Activated CD4-positive, alpha-beta memory T cell treated with anti-CD3 and anti-CD28 coated beads for 36 hours (primary cell): ENCODE measurements at regions of chr4 and their contacts with region 1.

Region 1: GRCh38 chr4:86497980-86498862 is 95.9 kb upstream of the PTPN13 start:
- DNase-seq: no peak
- H3K4me3 Mint-ChIP-seq: no peak overlapping the region
- H3K27ac Mint-ChIP-seq: no peak overlapping the region
- H3K4me1 Mint-ChIP-seq: no peaks in the 10 kb centered on the region
- H3K27me3 Mint-ChIP-seq: peaks cover 1% of the 10 kb centered on the region

Region 2: GRCh38 chr4:86487738-86488348 is 10.4 kb before region 1 on chr4:
- CTCF ChIA-PET with region 1: interaction called, 23 read pairs
- POLR2A ChIA-PET with region 1: no interaction called
- intact Hi-C with region 1: no loop called
- DNase-seq: no peak
- H3K4me3 Mint-ChIP-seq: no peak overlapping the region
- H3K27ac Mint-ChIP-seq: no peak overlapping the region
- H3K4me1 Mint-ChIP-seq: no peaks in the 10 kb centered on the region
- H3K27me3 Mint-ChIP-seq: no peaks in the 10 kb centered on the region

Region 3: GRCh38 chr4:86522349-86522748 is 24.1 kb after region 1 on chr4:
- CTCF ChIA-PET with region 1: interaction called, 19 read pairs
- POLR2A ChIA-PET with region 1: no interaction called
- intact Hi-C with region 1: no loop called
- DNase-seq: no peak
- H3K4me3 Mint-ChIP-seq: no peak overlapping the region
- H3K27ac Mint-ChIP-seq: no peak overlapping the region
- H3K4me1 Mint-ChIP-seq: no peaks in the 10 kb centered on the region
- H3K27me3 Mint-ChIP-seq: peaks cover 13% of the 10 kb centered on the region

Region 4: GRCh38 chr4:86895692-86896488 is 397.7 kb after region 1 on chr4:
- CTCF ChIA-PET with region 1: interaction called, 64 read pairs
- POLR2A ChIA-PET with region 1: no interaction called
- intact Hi-C with region 1: loop called (anchors 1 kb)
- DNase-seq: no peak
- H3K4me3 Mint-ChIP-seq: no peak overlapping the region
- H3K27ac Mint-ChIP-seq: no peak overlapping the region
- H3K4me1 Mint-ChIP-seq: no peaks in the 10 kb centered on the region
- H3K27me3 Mint-ChIP-seq: peaks cover 15% of the 10 kb centered on the region

Region 5: DNA sequence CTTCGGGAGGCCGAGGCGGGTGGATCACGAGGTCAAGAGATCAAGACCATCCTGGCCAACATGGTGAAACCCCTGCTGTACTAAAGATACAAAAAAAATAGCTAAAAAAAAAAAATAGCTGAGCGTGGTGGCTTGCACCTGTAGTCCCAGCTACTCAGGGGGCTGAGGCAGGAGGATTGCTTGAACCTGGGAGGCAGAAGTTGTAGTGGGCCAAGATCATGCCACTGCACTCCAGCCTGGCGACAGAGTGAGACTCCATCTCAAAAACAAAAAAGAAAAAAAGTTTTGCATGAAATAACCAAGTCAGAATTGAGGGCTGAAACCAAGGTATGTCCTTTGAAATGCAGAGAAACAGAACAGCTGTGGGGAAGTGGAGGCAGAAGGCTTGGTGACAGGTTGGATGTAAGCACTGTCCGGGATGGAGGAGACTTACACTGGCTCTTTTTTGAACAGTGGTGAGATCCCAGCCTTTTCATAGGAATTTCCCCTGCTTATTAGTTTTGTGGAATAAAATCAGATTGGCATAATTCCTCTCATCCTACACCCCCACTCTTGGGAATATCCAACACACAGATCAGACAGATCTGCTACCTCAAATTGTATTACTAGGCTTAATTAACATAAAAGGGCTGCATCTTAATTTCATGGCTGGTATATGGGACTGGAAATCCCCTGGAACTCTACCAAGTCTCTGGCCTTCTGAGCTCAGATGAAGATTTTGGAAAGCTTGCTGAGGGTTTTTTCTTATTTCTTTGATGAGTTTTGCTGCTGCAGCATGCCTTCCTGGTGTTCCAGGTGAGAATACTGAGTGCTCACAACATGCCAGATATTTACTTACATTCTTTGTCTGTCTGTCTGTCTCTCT is 412.8 kb after region 1 on chr4:
- CTCF ChIA-PET with region 1: interaction called, 12 read pairs
- POLR2A ChIA-PET with region 1: no interaction called
- intact Hi-C with region 1: no loop called
- DNase-seq: no peak
- H3K4me3 Mint-ChIP-seq: no peak overlapping the region
- H3K27ac Mint-ChIP-seq: no peak overlapping the region
- H3K4me1 Mint-ChIP-seq: peaks cover 14% of the 10 kb centered on the region
- H3K27me3 Mint-ChIP-seq: no peaks in the 10 kb centered on the region

Region 6: DNA sequence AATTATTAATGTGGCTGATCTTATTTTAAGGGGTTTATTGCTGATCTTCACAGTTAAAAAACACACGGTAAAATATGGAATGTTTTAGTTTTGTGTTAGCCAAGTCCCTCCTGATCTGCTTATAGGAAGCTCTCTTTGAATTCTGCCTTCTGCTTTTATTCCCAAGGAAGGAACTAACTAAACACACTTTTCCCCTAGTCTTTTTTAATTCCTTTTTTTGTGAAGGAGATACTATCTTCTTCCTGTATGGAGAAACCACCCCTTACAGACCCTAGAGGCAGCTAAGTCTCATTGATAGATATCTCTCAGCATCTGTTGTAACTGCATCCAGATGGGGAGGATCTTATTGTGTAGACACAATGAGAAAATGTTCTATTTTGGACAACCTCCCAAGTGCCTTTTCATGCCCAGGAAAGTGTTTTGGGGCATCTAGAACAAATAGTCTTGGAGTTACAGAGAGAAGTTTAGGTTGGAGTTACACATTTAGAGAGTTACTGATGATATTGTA is 501.0 kb after region 1 on chr4:
- CTCF ChIA-PET with region 1: no interaction called
- POLR2A ChIA-PET with region 1: no interaction called
- intact Hi-C with region 1: no loop called
- DNase-seq: no peak
- H3K4me3 Mint-ChIP-seq: no peak overlapping the region
- H3K27ac Mint-ChIP-seq: no peak overlapping the region
- H3K4me1 Mint-ChIP-seq: peaks cover 23% of the 10 kb centered on the region
- H3K27me3 Mint-ChIP-seq: no peaks in the 10 kb centered on the region

Region 7: GRCh38 chr4:87235020-87235671 is 736.9 kb after region 1 on chr4:
- CTCF ChIA-PET with region 1: no interaction called
- POLR2A ChIA-PET with region 1: no interaction called
- intact Hi-C with region 1: loop called (anchors 2 kb)
- DNase-seq: no peak
- H3K4me3 Mint-ChIP-seq: peak overlapping the region; percentile 73
- H3K27ac Mint-ChIP-seq: no peak overlapping the region
- H3K4me1 Mint-ChIP-seq: no peaks in the 10 kb centered on the region
- H3K27me3 Mint-ChIP-seq: peaks cover 2% of the 10 kb centered on the region